ENCODE measurements at regions of chr10 and their contacts with region 1.

Region 1: DNA sequence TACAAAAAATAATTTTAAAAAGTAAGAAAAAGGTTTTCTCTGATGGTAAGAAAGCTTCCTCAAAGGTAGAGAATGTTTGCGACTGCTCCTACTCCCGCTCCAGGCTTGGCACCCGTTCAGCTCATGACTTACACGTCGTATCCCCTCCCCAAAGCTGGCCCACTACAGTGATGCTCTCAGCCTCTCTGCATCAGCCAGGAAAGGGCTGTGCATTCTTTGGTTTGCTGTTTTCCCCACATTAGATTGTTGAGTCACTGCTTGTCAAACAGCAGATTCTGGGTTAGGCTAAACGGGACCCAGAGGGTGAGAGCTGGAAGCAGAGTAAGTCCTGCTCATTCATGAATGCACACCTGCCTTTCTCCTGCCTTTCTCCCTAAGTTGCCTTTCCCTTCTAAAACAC is 54.7 kb upstream of the NMT2 start:
- DNase-seq: no peak
- H3K4me3 ChIP-seq: no peak overlapping the region
- H3K27ac ChIP-seq: no peak overlapping the region
- H3K4me1 ChIP-seq: no peaks in the 10 kb centered on the region
- H3K27me3 ChIP-seq: no peaks in the 10 kb centered on the region
- CTCF ChIP-seq: no peak
- EP300 ChIP-seq: no peak
- POLR2A ChIP-seq: no peak
- RAD21 ChIP-seq: no peak

Region 2: GRCh38 chr10:15197911-15198310 is 25.3 kb before region 1 on chr10:
- CTCF ChIA-PET with region 1: no interaction called
- POLR2A ChIA-PET with region 1: no interaction called
- DNase-seq: no peak
- H3K4me3 ChIP-seq: no peak overlapping the region
- H3K27ac ChIP-seq: no peak overlapping the region
- H3K4me1 ChIP-seq: peaks cover 0 to 8% (median 2%) of the 10 kb centered on the region in 4 experiments; a peak in 2 of 7 replicates
- H3K27me3 ChIP-seq: no peaks in the 10 kb centered on the region
- CTCF ChIP-seq: no peak
- EP300 ChIP-seq: no peak
- POLR2A ChIP-seq: no peak
- RAD21 ChIP-seq: no peak

Region 3: DNA sequence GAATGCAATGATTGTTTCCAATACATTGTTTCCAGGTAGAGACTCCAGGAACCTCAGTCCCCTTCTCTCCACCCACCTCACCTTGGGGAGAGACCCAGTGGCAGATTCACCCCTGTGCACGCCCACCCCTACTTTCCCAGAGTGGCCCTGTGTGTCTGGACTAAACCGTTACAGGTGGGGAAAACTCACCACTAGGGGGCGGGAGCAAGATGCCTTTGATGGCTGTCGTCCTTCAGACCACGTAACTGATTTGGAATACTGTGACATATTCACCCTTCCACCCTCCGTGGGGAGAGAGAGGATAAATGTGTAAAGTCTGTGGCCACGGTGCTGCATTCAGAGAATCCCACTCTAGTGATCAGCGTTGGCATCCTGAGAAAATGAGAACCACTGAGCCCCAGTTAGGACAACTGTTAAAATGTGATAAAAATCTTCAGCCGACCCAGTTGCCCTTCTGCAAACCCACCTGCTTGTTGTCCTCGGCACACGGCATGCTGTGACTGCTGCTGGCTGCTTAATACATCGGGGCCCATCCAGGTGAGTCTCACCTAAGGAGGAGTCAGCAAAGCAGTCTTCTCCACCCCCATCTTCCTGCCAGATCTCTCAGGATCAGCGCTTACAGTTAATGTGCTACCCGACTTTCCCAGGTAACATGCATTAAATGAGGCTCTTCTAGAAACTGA is 13.2 kb before region 1 on chr10:
- CTCF ChIA-PET with region 1: interaction called, 21 read pairs
- POLR2A ChIA-PET with region 1: interaction called, 3 read pairs
- DNase-seq: peak; percentile 46 to 91
- H3K4me3 ChIP-seq: no peak overlapping the region; a peak in 1 of 8 replicates
- H3K27ac ChIP-seq: no peak overlapping the region
- H3K4me1 ChIP-seq: no peaks in the 10 kb centered on the region; a peak in 1 of 7 replicates
- H3K27me3 ChIP-seq: no peaks in the 10 kb centered on the region
- CTCF ChIP-seq: peak; percentile 74 to 92 (median 86)
- EP300 ChIP-seq: no peak
- POLR2A ChIP-seq: no peak
- RAD21 ChIP-seq: peak; percentile 71 to 73